OCI-LY7 (cell line): ENCODE measurements at regions of chr14 and their contacts with region 1.

Region 1: GRCh38 chr14:61355892-61356325 is 34.5 kb downstream of the PRKCH start:
- DNase-seq: no peak
- H3K4me3 ChIP-seq: no peak overlapping the region
- H3K27ac ChIP-seq: no peak overlapping the region
- H3K4me1 ChIP-seq: no peaks in the 10 kb centered on the region
- CTCF ChIP-seq: no peak

Region 2: GRCh38 chr14:61750708-61751474 is 395.0 kb after region 1 on chr14:
- CTCF ChIA-PET with region 1: no interaction called
- POLR2A ChIA-PET with region 1: no interaction called
- intact Hi-C with region 1: no loop called
- DNase-seq: peak; percentile 92
- H3K4me3 ChIP-seq: peak overlapping the region; percentile 69
- H3K27ac ChIP-seq: peak overlapping the region; percentile 26
- H3K4me1 ChIP-seq: peaks cover 65% of the 10 kb centered on the region
- CTCF ChIP-seq: no peak

Region 3: GRCh38 chr14:62409626-62410300 is 1053.9 kb after region 1 on chr14:
- CTCF ChIA-PET with region 1: no interaction called
- POLR2A ChIA-PET with region 1: no interaction called
- intact Hi-C with region 1: loop called (anchors 5 kb)
- DNase-seq: no peak
- H3K4me3 ChIP-seq: no peak overlapping the region
- H3K27ac ChIP-seq: no peak overlapping the region
- H3K4me1 ChIP-seq: no peaks in the 10 kb centered on the region
- CTCF ChIP-seq: no peak